Activated T-helper 1 cell treated with anti-CD3 and anti-CD28 coated beads, Interleukin-12 subunit alpha, Interleukin-12 subunit beta, Interleukin-2, Interleukin-4 antibody, amounts not matched to agents 30 ng/mL and 10 ng/mL and 1 ng/mL, durations not matched to agents 14 hours and 24 hours and 36 hours (primary cell): ENCODE measurements at regions of chr1 and their contacts with region 1.

Region 1: GRCh38 chr1:45550401-45551351 is at the start of gene AKR1A1:
- DNase-seq: peak; percentile 85
- H3K4me3 Mint-ChIP-seq: peak within 1 kb of the TSS; percentile 93
- H3K27ac Mint-ChIP-seq: peak within 1 kb of the TSS; percentile 92
- H3K4me1 Mint-ChIP-seq: peaks cover 29% of the 10 kb centered on the region
- H3K27me3 Mint-ChIP-seq: peaks cover 5% of the 10 kb centered on the region
- total RNA-seq, gene AKR1A1: 192 and 194 TPM in 2 replicates

Region 2: GRCh38 chr1:45499415-45499769 is 51.3 kb before region 1 on chr1:
- intact Hi-C with region 1: loop called (anchors 2 kb)
- DNase-seq: no peak
- H3K4me3 Mint-ChIP-seq: peak overlapping the region; percentile 93
- H3K27ac Mint-ChIP-seq: peak overlapping the region; percentile 83
- H3K4me1 Mint-ChIP-seq: peaks cover 37% of the 10 kb centered on the region
- H3K27me3 Mint-ChIP-seq: no peaks in the 10 kb centered on the region

Region 3: GRCh38 chr1:45512641-45513054 is 38.0 kb before region 1 on chr1:
- intact Hi-C with region 1: loop called (anchors 2 kb)
- DNase-seq: peak; percentile 43
- H3K4me3 Mint-ChIP-seq: no peak overlapping the region
- H3K27ac Mint-ChIP-seq: peak overlapping the region; percentile 55
- H3K4me1 Mint-ChIP-seq: peaks cover 39% of the 10 kb centered on the region
- H3K27me3 Mint-ChIP-seq: no peaks in the 10 kb centered on the region